CD4-positive, alpha-beta T cell (primary cell): ENCODE measurements at regions of chr3 and their contacts with region 1.

Region 1: GRCh38 chr3:107660306-107660976 is 137.7 kb downstream of the BBX start:
- DNase-seq: peak in 3 of 14 experiments; percentile 48 to 70 (median 60)
- ATAC-seq: no peak
- H3K4me3 ChIP-seq: no peak overlapping the region
- H3K4me3 Mint-ChIP-seq: no peak overlapping the region
- H3K27ac ChIP-seq: no peak overlapping the region
- H3K27ac Mint-ChIP-seq: no peak overlapping the region
- H3K4me1 ChIP-seq: peaks cover 7% of the 10 kb centered on the region
- H3K4me1 Mint-ChIP-seq: peaks cover 45% of the 10 kb centered on the region
- H3K27me3 ChIP-seq: no peaks in the 10 kb centered on the region
- H3K27me3 Mint-ChIP-seq: no peaks in the 10 kb centered on the region
- CTCF ChIP-seq: peak; percentile 86

Region 2: GRCh38 chr3:107598926-107599771 is 61.3 kb before region 1 on chr3:
- CTCF ChIA-PET with region 1: no interaction called
- POLR2A ChIA-PET with region 1: no interaction called
- intact Hi-C with region 1: no loop called
- DNase-seq: peak in 13 of 14 experiments; percentile 21 to 69 (median 31)
- ATAC-seq: peak; percentile 90
- H3K4me3 ChIP-seq: peak overlapping the region; percentile 49
- H3K4me3 Mint-ChIP-seq: peak overlapping the region; percentile 86
- H3K27ac ChIP-seq: peak overlapping the region; percentile 52 to 82
- H3K27ac Mint-ChIP-seq: peak overlapping the region; percentile 84
- H3K4me1 ChIP-seq: peaks cover 11% of the 10 kb centered on the region
- H3K4me1 Mint-ChIP-seq: peaks cover 76% of the 10 kb centered on the region
- H3K27me3 ChIP-seq: no peaks in the 10 kb centered on the region
- H3K27me3 Mint-ChIP-seq: no peaks in the 10 kb centered on the region
- CTCF ChIP-seq: no peak

Region 3: GRCh38 chr3:107676469-107677309 is 16.2 kb after region 1 on chr3:
- CTCF ChIA-PET with region 1: interaction called, 21 read pairs
- POLR2A ChIA-PET with region 1: interaction called, 5 read pairs
- intact Hi-C with region 1: no loop called
- DNase-seq: peak in 3 of 14 experiments; percentile 38 to 49 (median 39)
- ATAC-seq: peak; percentile 51
- H3K4me3 ChIP-seq: no peak overlapping the region
- H3K4me3 Mint-ChIP-seq: no peak overlapping the region
- H3K27ac ChIP-seq: no peak overlapping the region
- H3K27ac Mint-ChIP-seq: peak overlapping the region; percentile 8
- H3K4me1 ChIP-seq: no peaks in the 10 kb centered on the region
- H3K4me1 Mint-ChIP-seq: peaks cover 47% of the 10 kb centered on the region
- H3K27me3 ChIP-seq: no peaks in the 10 kb centered on the region
- H3K27me3 Mint-ChIP-seq: no peaks in the 10 kb centered on the region
- CTCF ChIP-seq: peak; percentile 77

Region 4: DNA sequence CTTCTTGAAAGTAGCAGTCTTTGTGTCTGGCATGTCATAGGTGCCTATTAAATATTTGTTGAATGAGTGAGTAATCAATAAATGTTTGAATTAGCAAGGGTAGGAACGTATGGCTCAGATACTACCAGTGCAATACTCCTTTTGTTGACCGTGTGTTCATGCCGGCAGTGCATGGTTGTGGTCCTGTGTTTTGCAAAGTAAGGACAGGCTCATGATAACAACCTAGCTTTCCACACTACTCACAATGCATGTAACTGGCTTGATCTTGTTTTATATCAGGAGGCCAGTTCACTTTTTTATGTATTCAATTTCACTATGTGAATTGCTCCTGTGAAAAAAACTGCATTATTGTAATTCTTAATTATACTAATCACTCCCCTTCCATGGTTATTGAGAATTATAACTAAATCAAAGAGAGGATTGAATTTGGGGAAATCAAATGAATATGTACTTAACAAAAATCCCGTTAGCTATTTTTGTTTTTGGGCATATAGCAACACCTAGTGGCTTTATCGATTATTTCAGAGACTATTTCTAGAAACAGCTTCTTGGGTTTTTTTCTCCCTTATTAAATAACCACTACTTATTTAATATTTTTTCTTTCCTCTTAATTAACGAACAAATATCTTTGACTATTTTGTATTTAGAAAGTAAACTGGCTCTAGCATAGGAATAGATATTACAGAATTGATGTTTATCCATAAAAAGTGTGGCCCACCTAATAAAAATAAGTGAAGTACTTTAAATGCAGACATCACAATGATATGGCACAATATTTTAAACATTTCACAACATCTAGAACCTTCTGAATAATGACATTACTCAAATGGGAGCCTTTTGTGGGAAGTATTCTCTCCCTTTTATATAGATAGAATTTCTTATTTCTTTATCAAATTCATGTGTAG is 80.8 kb after region 1 on chr3:
- CTCF ChIA-PET with region 1: interaction called, 8 read pairs
- POLR2A ChIA-PET with region 1: no interaction called
- intact Hi-C with region 1: loop called (anchors 1 to 5 kb)
- DNase-seq: peak in 3 of 14 experiments; percentile 37 to 40 (median 40)
- ATAC-seq: no peak
- H3K4me3 ChIP-seq: no peak overlapping the region
- H3K4me3 Mint-ChIP-seq: no peak overlapping the region
- H3K27ac ChIP-seq: no peak overlapping the region
- H3K27ac Mint-ChIP-seq: no peak overlapping the region
- H3K4me1 ChIP-seq: no peaks in the 10 kb centered on the region
- H3K4me1 Mint-ChIP-seq: no peaks in the 10 kb centered on the region
- H3K27me3 ChIP-seq: no peaks in the 10 kb centered on the region
- H3K27me3 Mint-ChIP-seq: no peaks in the 10 kb centered on the region
- CTCF ChIP-seq: peak; percentile 71

Region 5: DNA sequence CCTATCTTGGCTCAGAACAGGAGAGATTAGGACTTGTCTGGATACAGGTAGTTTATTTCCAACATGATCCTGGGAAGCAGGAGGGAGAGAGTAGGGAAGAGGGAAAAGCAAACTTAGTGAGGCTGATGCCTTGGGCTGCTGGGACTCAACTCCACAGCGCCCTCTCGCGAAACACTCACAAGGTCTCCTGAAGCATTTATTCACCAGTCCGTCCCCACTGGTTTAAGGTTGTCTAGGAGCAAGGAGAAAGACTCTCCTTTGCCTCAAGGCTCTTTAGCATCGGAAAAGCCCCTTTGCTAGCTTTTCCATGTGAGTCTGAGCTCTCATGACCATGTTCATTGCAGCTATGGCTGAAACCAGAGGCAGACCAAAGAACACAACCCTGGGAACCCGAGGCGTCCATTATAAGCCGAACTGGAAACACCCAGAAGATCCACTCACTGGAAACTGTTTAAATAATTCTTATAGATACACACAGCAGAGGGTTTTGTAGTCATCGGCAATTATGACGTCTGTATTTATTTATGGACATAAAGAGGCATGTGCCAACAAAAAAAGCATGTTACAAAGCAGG is 185.9 kb after region 1 on chr3:
- CTCF ChIA-PET with region 1: no interaction called
- POLR2A ChIA-PET with region 1: no interaction called
- intact Hi-C with region 1: loop called (anchors 10 kb)
- DNase-seq: peak in 9 of 14 experiments; percentile 4 to 59 (median 12)
- ATAC-seq: no peak
- H3K4me3 ChIP-seq: no peak overlapping the region
- H3K4me3 Mint-ChIP-seq: no peak overlapping the region
- H3K27ac ChIP-seq: no peak overlapping the region
- H3K27ac Mint-ChIP-seq: no peak overlapping the region
- H3K4me1 ChIP-seq: no peaks in the 10 kb centered on the region
- H3K4me1 Mint-ChIP-seq: no peaks in the 10 kb centered on the region
- H3K27me3 ChIP-seq: no peaks in the 10 kb centered on the region
- H3K27me3 Mint-ChIP-seq: no peaks in the 10 kb centered on the region
- CTCF ChIP-seq: peak; percentile 30

Region 6: GRCh38 chr3:107927361-107928083 is 267.1 kb after region 1 on chr3:
- CTCF ChIA-PET with region 1: no interaction called
- POLR2A ChIA-PET with region 1: no interaction called
- intact Hi-C with region 1: loop called in 1 of 2 experiments (anchors 10 kb)
- DNase-seq: peak; percentile 37 to 83 (median 56)
- ATAC-seq: peak; percentile 90
- H3K4me3 ChIP-seq: peak overlapping the region; percentile 68
- H3K4me3 Mint-ChIP-seq: peak overlapping the region; percentile 91
- H3K27ac ChIP-seq: no peak overlapping the region
- H3K27ac Mint-ChIP-seq: no peak overlapping the region
- H3K4me1 ChIP-seq: peaks cover 16% of the 10 kb centered on the region
- H3K4me1 Mint-ChIP-seq: peaks cover 14% of the 10 kb centered on the region
- H3K27me3 ChIP-seq: peaks cover 0 to 6% of the 10 kb centered on the region in 2 experiments
- H3K27me3 Mint-ChIP-seq: peaks cover 4% of the 10 kb centered on the region
- CTCF ChIP-seq: peak; percentile 94

Region 7: DNA sequence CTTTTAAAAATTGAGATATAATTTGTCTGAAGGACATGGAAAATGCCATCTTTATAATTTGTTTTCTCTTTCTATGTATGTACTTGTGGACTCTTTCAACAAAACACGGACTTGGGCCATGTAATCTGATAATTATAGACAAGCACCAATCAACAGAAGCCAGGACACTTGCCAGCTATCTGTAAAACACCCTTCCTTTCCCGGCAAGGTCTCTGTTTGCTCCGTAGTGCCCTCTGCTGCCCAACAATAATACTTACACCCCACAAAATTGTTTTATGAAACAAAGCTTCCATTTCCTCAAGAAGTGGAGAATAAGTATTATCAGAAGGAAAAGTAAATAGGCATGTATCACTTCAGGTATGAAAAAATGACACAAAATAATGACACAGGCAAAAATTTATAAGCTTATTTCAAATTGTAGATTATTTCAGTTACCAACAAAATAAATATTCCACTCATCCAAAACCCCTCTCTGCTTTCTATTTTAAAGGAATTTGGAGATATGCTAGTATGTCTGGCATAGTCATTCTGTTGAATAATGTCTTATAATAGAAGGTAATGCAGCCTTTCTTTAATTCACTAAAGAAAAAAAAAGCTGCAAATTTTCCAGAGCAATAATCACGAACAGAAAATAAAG is 817.2 kb after region 1 on chr3:
- CTCF ChIA-PET with region 1: no interaction called
- POLR2A ChIA-PET with region 1: no interaction called
- intact Hi-C with region 1: loop called (anchors 5 kb)
- DNase-seq: peak; percentile 23 to 78 (median 44)
- ATAC-seq: peak; percentile 89
- H3K4me3 ChIP-seq: no peak overlapping the region
- H3K4me3 Mint-ChIP-seq: no peak overlapping the region
- H3K27ac ChIP-seq: no peak overlapping the region
- H3K27ac Mint-ChIP-seq: no peak overlapping the region
- H3K4me1 ChIP-seq: no peaks in the 10 kb centered on the region
- H3K4me1 Mint-ChIP-seq: peaks cover 4% of the 10 kb centered on the region
- H3K27me3 ChIP-seq: no peaks in the 10 kb centered on the region
- H3K27me3 Mint-ChIP-seq: no peaks in the 10 kb centered on the region
- CTCF ChIP-seq: peak; percentile 72

Region 8: DNA sequence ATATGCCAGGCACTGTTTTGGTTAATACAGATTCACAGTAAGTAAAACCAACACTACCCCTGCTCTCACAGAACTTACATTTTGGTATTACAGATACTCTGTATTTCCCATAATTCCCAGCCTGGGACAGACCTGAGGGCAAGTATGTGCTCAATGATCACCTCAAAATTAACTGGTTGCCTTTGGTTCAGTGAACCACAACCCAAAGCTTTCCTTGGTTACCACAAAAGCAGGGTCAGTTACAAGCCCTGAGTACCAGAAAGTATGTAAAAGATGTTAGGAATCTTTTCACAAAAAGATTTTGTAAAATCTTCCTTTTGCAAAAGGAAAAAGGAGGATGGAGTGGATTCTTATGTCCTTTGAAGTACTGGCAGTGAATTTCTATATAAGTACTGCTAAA is 1365.5 kb after region 1 on chr3:
- CTCF ChIA-PET with region 1: no interaction called
- POLR2A ChIA-PET with region 1: no interaction called
- intact Hi-C with region 1: loop called in 1 of 2 experiments (anchors 5 kb)
- DNase-seq: no peak
- ATAC-seq: no peak
- H3K4me3 ChIP-seq: no peak overlapping the region
- H3K4me3 Mint-ChIP-seq: no peak overlapping the region
- H3K27ac ChIP-seq: no peak overlapping the region
- H3K27ac Mint-ChIP-seq: no peak overlapping the region
- H3K4me1 ChIP-seq: no peaks in the 10 kb centered on the region
- H3K4me1 Mint-ChIP-seq: no peaks in the 10 kb centered on the region
- H3K27me3 ChIP-seq: no peaks in the 10 kb centered on the region
- H3K27me3 Mint-ChIP-seq: no peaks in the 10 kb centered on the region
- CTCF ChIP-seq: no peak